RWPE1 (cell line): ENCODE measurements at regions of chr5 and their contacts with region 1.

Region 1: DNA sequence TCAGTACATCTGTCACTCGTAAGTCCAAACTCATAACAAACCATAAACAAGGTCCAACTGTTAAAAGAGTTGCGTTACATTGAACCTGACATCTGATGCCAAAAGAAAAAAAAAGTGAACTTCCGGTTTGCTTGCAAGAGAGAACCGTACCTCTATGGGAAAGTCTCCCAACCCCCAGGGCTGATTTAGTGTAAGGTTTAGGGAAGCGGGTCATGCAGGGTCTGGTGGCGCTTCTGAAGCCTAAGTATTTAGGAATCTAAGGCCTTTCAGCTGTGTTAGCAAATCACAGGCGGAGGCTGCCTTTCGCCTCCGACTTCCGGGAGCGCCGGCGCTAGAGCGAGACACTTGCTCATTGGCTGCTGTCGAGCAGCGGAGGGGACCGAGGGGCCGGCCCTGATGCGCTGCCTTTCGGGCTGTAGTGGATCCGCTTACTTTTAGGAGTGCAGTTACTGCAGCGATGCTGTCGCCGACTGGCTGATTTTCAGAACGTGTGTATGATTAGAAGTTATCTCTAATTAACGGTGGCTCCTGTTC is 12.0 kb upstream of the GNPDA1 start:
- DNase-seq: peak; percentile 92
- H3K27ac ChIP-seq: peak overlapping the region; percentile 80
- CTCF ChIP-seq: no peak

Region 2: DNA sequence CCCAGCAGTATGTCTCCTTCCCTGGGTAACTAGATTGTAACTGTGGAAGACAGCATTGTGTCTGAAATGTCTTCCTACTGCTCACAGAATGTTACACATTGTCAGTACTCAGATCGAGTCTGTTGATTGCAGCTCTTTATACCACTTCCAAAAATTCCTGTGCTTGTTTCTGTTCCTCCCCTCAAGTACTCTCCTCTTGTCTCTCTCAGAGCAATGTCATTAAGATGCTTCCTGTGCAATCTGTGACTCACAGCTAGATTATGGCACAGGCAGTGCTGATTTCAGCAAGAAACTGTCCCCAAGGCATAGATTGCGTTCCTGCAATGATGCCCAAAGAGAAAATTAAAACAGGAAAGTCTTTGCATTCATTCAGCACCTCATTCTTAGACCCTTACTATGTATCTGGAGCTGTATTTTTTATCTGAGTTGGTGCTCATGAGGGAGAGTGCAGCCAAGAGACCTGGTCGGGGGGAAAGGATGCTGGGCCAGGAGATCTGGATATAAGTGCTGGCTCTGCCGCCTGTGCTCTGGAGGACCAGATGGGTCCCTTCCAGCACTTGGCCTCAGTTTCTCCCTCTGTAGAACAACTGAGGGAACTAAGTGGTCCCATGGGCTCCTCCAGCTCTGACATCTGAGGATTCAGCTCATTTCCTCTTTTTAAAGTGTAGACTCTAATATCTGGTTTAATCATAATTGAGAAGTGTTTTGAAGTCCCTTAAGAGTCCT is 28.8 kb after region 1 on chr5:
- CTCF ChIA-PET with region 1: interaction called, 13 read pairs
- POLR2A ChIA-PET with region 1: interaction called, 15 read pairs
- DNase-seq: no peak
- H3K27ac ChIP-seq: no peak overlapping the region
- CTCF ChIP-seq: no peak